Dendritic cell treated with granulocyte-macrophage colony-stimulating factor and Interleukin-4, amounts not matched to agents 40 ng/mL and 50 ng/mL, for 4 days (primary cell): ENCODE measurements at regions of chr2 and their contacts with region 1.

Region 1: DNA sequence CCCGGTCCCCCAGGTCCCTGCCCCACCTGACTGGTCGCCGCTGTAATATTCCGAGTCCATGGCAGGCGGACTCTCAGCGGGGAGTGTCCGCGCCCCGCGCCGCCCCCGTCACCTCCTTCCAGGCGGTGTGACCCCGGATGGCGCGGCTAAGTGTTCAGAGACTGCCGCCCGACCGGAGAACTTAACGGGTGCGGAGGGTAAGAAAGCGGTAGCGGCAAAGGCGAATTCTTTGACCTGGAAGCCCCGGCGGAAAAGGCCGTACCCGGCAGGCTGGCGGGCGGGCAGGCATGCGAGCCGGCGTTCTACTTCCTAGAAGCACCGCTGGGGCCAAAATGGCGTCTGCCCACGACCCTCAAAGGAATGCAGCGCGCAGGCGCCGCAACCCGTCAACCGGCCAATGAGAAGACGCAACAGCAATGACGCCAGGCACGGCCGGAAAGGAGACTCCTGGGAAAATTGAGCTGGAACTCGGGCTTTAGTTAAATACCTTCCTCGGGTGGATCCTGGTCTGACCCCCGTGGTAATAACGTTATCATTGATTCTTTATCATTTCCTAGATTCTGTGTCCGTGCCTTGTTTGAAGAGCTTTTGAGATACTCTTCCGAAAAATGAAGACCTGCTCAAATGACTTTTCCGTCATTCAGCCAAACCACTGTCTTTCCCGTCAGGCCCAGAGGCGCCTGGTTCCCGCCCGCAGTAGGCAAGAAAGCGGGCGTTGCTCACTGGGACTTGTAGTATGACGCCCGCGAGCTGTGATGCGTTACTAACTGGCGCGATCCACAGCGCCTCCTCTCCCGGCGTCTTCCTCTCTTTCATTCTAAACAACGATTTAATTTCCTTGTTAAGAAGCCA is at the start of gene IWS1:
- H3K4me3 Mint-ChIP-seq: peak within 1 kb of the TSS; percentile 95
- H3K27ac Mint-ChIP-seq: peak within 1 kb of the TSS; percentile 99
- H3K4me1 Mint-ChIP-seq: peaks cover 34% of the 10 kb centered on the region
- H3K27me3 Mint-ChIP-seq: no peaks in the 10 kb centered on the region

Region 2: GRCh38 chr2:127563458-127564428 is 37.4 kb after region 1 on chr2:
- intact Hi-C with region 1: loop called (anchors 5 kb)
- H3K4me3 Mint-ChIP-seq: no peak overlapping the region
- H3K27ac Mint-ChIP-seq: peak overlapping the region; percentile 23
- H3K4me1 Mint-ChIP-seq: peaks cover 58% of the 10 kb centered on the region
- H3K27me3 Mint-ChIP-seq: no peaks in the 10 kb centered on the region

Region 3: DNA sequence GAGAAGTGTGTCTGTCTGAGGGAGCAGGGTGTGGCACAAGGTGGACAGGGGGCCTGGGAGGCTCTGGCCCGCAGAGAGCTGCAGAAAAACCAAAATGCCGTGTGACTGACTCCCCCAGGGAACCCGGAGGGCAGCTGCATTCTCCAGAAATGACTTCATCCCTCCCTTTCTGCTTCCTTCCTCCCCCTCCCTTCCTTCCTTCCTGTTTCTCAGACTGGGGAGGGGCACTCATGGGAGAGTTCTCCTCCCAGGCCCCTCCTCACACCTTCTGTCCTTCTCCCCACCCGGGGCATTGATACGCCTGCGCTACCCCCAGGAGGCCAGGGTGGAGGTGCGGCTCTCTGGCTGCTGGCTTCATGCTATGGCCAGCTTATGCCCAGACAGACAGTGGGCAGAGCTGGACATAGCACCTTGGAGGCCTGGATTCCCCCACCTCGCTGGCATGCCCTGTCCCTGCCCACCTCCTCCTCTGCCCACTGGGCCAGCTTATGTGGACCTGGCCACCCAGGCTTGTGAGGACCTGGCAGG is 111.4 kb after region 1 on chr2:
- intact Hi-C with region 1: loop called (anchors 10 kb)
- H3K4me3 Mint-ChIP-seq: no peak overlapping the region
- H3K27ac Mint-ChIP-seq: peak overlapping the region; percentile 89
- H3K4me1 Mint-ChIP-seq: peaks cover 82% of the 10 kb centered on the region
- H3K27me3 Mint-ChIP-seq: no peaks in the 10 kb centered on the region

Region 4: DNA sequence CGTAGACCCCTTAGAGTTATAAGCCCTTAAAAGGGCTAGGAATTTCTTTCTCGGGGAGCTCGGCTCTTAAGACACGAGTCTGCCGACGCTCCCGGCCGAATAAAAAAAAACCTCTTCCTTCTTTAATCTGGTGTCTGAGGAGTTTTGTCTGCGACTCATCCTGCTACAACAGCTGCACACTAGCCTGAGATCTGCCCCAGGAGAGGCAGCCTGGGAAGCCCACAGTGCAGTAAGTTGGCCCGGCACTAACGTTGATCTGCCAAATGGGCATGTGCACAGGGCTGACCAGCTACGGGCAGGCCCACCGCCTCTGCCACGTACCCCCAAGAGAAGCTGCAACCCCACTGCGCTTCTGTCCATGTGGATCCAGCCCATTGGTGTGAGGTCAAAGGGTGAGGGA is 157.4 kb after region 1 on chr2:
- intact Hi-C with region 1: no loop called
- H3K4me3 Mint-ChIP-seq: no peak overlapping the region
- H3K27ac Mint-ChIP-seq: no peak overlapping the region
- H3K4me1 Mint-ChIP-seq: peaks cover 6% of the 10 kb centered on the region
- H3K27me3 Mint-ChIP-seq: peaks cover 33% of the 10 kb centered on the region